PC-9 (cell line): ENCODE measurements at regions of chr16 and their contacts with region 1.

Region 1: GRCh38 chr16:87765776-87766484 is at the start of gene KLHDC4:
- DNase-seq: peak; percentile 78 to 82
- H3K4me3 ChIP-seq: peak within 1 kb of the TSS; percentile 90
- H3K27ac ChIP-seq: peak within 1 kb of the TSS; percentile 52
- H3K4me1 ChIP-seq: peaks cover 11% of the 10 kb centered on the region; the same call in 1 of the 2 replicates
- H3K27me3 ChIP-seq: no peaks in the 10 kb centered on the region
- CTCF ChIP-seq: no peak
- total RNA-seq, gene KLHDC4: 66.5 and 74.2 TPM in 2 replicates

Region 2: GRCh38 chr16:86563489-86564345 is 1202.2 kb before region 1 on chr16:
- CTCF ChIA-PET with region 1: interaction called, 7 read pairs
- POLR2A ChIA-PET with region 1: interaction called, 10 read pairs
- intact Hi-C with region 1: loop called (anchors 5 kb)
- DNase-seq: peak; percentile 72 to 82
- H3K4me3 ChIP-seq: peak overlapping the region; percentile 19; the same call in 1 of the 2 replicates
- H3K27ac ChIP-seq: no peak overlapping the region
- H3K4me1 ChIP-seq: no peaks in the 10 kb centered on the region
- H3K27me3 ChIP-seq: peaks cover 42% of the 10 kb centered on the region
- CTCF ChIP-seq: peak; percentile 100

Region 3: GRCh38 chr16:87822108-87822970 is 56.4 kb after region 1 on chr16:
- CTCF ChIA-PET with region 1: no interaction called
- POLR2A ChIA-PET with region 1: no interaction called
- intact Hi-C with region 1: no loop called
- DNase-seq: no peak
- H3K4me3 ChIP-seq: no peak overlapping the region
- H3K27ac ChIP-seq: no peak overlapping the region
- H3K4me1 ChIP-seq: no peaks in the 10 kb centered on the region
- H3K27me3 ChIP-seq: no peaks in the 10 kb centered on the region
- CTCF ChIP-seq: no peak

Region 4: DNA sequence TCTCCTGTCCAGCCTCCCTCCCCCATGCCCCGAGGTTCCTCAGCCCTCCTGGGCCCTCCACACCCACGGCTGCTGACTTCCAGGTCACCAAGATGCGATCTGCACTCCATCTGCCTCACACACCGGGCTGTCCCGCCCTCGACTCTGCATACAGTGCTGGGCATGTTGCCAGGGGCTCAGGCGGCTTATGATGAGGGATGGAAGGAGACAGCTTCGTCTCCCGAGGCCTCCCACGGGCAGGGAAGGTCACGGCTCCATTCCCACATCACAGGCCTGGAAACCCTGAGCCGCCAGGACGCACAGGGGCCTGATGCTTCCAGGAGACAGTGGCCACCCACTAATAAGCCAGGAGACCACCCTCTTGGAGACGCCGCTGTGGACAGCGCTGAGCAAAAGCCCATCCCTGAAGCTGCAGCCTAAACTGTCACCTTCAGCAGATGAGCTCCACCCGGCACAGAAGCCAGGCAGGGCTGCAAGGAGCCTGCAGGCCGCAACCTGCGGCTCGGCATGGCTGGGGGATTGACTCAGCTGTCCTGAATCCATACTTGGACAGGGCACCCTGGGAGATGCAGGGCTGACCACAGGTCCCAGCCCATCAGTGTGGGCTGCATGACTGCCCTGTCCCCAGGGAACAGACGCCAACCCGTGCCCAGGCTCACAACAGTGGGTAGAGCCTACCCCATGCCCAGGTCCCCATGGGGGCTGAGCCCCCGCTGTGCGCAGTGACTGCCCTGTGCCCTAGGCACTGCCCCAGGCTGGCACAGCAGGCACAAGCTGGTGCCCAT is 68.9 kb after region 1 on chr16:
- CTCF ChIA-PET with region 1: no interaction called
- POLR2A ChIA-PET with region 1: interaction called, 12 read pairs
- intact Hi-C with region 1: no loop called
- DNase-seq: peak in 1 of 2 experiments; percentile 49
- H3K4me3 ChIP-seq: no peak overlapping the region
- H3K27ac ChIP-seq: no peak overlapping the region
- H3K4me1 ChIP-seq: no peaks in the 10 kb centered on the region
- H3K27me3 ChIP-seq: no peaks in the 10 kb centered on the region
- CTCF ChIP-seq: no peak

Region 5: DNA sequence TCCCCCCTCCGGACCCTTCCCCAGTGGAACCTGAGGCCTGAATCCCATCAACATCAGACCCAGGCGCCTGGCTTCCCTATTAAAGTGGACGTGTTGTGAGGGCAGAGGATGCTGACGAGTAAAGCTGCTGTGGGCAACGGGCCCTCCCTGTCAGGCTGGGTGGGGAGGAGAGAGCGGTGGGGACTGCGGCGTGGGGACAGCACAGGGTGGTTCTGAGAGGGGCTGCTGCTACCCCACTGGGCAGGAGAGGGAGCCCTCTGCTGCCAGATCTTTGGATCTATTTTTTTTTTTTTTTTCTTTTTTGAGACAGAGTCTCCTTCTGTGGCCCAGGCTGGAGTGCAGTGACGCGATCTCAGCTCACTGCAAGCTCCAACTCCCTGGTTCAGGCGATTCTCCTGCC is 164.5 kb after region 1 on chr16:
- CTCF ChIA-PET with region 1: no interaction called
- POLR2A ChIA-PET with region 1: no interaction called
- intact Hi-C with region 1: no loop called
- DNase-seq: peak in 1 of 2 experiments; percentile 25
- H3K4me3 ChIP-seq: no peak overlapping the region
- H3K27ac ChIP-seq: no peak overlapping the region
- H3K4me1 ChIP-seq: no peaks in the 10 kb centered on the region
- H3K27me3 ChIP-seq: no peaks in the 10 kb centered on the region
- CTCF ChIP-seq: peak; percentile 59